ENCODE measurements at regions of chr7 and their contacts with region 1.

Region 1: GRCh38 chr7:43700059-43700501 is 29.2 kb downstream of the COA1 start:
- DNase-seq: no peak
- H3K4me3 Mint-ChIP-seq: no peak overlapping the region
- H3K27ac Mint-ChIP-seq: no peak overlapping the region
- H3K4me1 Mint-ChIP-seq: peaks cover 65% of the 10 kb centered on the region
- H3K27me3 Mint-ChIP-seq: no peaks in the 10 kb centered on the region

Region 2: DNA sequence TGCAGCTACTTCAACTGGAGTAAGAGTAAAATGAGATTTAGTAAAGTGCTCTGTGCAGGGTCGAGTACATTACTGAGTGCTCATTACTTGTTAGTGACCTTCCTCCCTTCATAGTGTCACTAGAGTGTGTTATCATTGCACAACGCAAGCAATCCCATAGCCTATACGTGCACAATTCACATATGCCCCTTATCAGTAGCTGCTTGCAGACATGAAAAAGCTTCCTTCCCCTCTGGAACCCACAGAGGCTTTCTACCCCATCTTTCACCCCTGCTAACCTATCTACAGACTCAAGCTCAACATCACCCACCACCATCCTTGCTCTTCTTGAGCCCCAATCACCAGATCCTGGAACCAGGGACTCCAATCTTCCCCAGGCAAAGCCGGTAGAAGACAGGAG is 847.5 kb before region 1 on chr7:
- intact Hi-C with region 1: no loop called
- DNase-seq: no peak
- H3K4me3 Mint-ChIP-seq: no peak overlapping the region
- H3K27ac Mint-ChIP-seq: no peak overlapping the region
- H3K4me1 Mint-ChIP-seq: peaks cover 10% of the 10 kb centered on the region
- H3K27me3 Mint-ChIP-seq: peaks cover 31% of the 10 kb centered on the region

Region 3: DNA sequence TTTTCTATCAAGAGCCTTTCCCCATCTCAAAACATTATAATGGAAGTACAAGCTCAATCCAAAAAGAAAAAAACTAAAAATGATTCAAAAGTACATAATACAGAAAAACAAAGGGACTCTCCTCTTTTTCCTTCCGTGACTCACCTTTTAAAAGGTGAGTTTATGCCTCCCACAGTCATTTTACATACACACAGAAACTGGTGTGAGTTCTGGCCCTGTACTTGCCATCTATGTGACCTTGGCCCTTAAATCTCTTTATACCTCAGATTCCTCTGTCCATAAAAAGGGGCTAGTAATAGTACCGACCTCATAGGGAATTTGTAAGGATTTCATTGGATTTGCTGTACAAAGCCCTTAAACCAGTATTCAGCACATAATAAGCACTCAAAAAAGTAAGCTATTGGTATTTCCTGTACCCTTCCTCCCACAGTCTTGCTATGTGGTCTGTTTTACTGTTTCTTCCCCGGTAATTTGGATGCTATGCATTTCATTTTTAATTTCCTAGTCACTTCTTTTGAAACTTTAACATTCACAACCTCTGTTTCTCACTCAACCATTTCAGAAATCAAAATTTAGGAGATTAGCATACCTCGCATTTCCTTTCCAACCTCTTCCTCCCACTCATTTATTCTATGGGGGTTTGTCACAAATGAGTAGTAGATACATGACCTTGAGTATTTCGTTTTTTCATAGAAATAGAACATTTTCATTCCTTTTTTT is 78.2 kb before region 1 on chr7:
- intact Hi-C with region 1: loop called (anchors 2 kb)
- DNase-seq: no peak
- H3K4me3 Mint-ChIP-seq: peak overlapping the region; percentile 6
- H3K27ac Mint-ChIP-seq: peak overlapping the region; percentile 69
- H3K4me1 Mint-ChIP-seq: peaks cover 55% of the 10 kb centered on the region
- H3K27me3 Mint-ChIP-seq: no peaks in the 10 kb centered on the region

Region 4: GRCh38 chr7:43658718-43659548 is 41.1 kb before region 1 on chr7:
- intact Hi-C with region 1: loop called (anchors 2 kb)
- DNase-seq: no peak
- H3K4me3 Mint-ChIP-seq: peak overlapping the region; percentile 66
- H3K27ac Mint-ChIP-seq: peak overlapping the region; percentile 95
- H3K4me1 Mint-ChIP-seq: peaks cover 49% of the 10 kb centered on the region
- H3K27me3 Mint-ChIP-seq: no peaks in the 10 kb centered on the region

Measured in activated T-helper 1 cell treated with anti-CD3 and anti-CD28 coated beads, Interleukin-12 subunit alpha, Interleukin-12 subunit beta, Interleukin-2, Interleukin-4 antibody, amounts not matched to agents 30 ng/mL and 10 ng/mL and 1 ng/mL, durations not matched to agents 14 hours and 24 hours and 36 hours (primary cell).